CD8-positive, alpha-beta T cell (primary cell): ENCODE measurements at regions of chr12 and their contacts with region 1.

Region 1: GRCh38 chr12:17763366-17763765 is 326.6 kb downstream of the RERGL start:
- DNase-seq: no peak
- ATAC-seq: no peak
- H3K4me3 ChIP-seq: no peak overlapping the region
- H3K4me3 Mint-ChIP-seq: no peak overlapping the region
- H3K27ac ChIP-seq: no peak overlapping the region
- H3K27ac Mint-ChIP-seq: no peak overlapping the region
- H3K4me1 ChIP-seq: no peaks in the 10 kb centered on the region
- H3K4me1 Mint-ChIP-seq: no peaks in the 10 kb centered on the region
- H3K27me3 ChIP-seq: no peaks in the 10 kb centered on the region
- H3K27me3 Mint-ChIP-seq: no peaks in the 10 kb centered on the region
- CTCF ChIP-seq: no peak

Region 2: GRCh38 chr12:17853054-17853453 is 89.7 kb after region 1 on chr12:
- CTCF ChIA-PET with region 1: no interaction called
- POLR2A ChIA-PET with region 1: no interaction called
- intact Hi-C with region 1: loop called (anchors 2 kb)
- DNase-seq: no peak
- ATAC-seq: no peak
- H3K4me3 ChIP-seq: no peak overlapping the region
- H3K4me3 Mint-ChIP-seq: no peak overlapping the region
- H3K27ac ChIP-seq: no peak overlapping the region
- H3K27ac Mint-ChIP-seq: no peak overlapping the region
- H3K4me1 ChIP-seq: no peaks in the 10 kb centered on the region
- H3K4me1 Mint-ChIP-seq: no peaks in the 10 kb centered on the region
- H3K27me3 ChIP-seq: no peaks in the 10 kb centered on the region
- H3K27me3 Mint-ChIP-seq: no peaks in the 10 kb centered on the region
- CTCF ChIP-seq: no peak

Region 3: GRCh38 chr12:18320036-18320617 is 556.8 kb after region 1 on chr12:
- CTCF ChIA-PET with region 1: no interaction called
- POLR2A ChIA-PET with region 1: no interaction called
- intact Hi-C with region 1: no loop called
- DNase-seq: no peak
- ATAC-seq: no peak
- H3K4me3 ChIP-seq: no peak overlapping the region
- H3K4me3 Mint-ChIP-seq: no peak overlapping the region
- H3K27ac ChIP-seq: no peak overlapping the region
- H3K27ac Mint-ChIP-seq: no peak overlapping the region
- H3K4me1 ChIP-seq: no peaks in the 10 kb centered on the region
- H3K4me1 Mint-ChIP-seq: no peaks in the 10 kb centered on the region
- H3K27me3 ChIP-seq: no peaks in the 10 kb centered on the region
- H3K27me3 Mint-ChIP-seq: no peaks in the 10 kb centered on the region
- CTCF ChIP-seq: no peak